Aorta (tissue), 5 donors: ENCODE measurements at regions of chr10 and their contacts with region 1.

Region 1: DNA sequence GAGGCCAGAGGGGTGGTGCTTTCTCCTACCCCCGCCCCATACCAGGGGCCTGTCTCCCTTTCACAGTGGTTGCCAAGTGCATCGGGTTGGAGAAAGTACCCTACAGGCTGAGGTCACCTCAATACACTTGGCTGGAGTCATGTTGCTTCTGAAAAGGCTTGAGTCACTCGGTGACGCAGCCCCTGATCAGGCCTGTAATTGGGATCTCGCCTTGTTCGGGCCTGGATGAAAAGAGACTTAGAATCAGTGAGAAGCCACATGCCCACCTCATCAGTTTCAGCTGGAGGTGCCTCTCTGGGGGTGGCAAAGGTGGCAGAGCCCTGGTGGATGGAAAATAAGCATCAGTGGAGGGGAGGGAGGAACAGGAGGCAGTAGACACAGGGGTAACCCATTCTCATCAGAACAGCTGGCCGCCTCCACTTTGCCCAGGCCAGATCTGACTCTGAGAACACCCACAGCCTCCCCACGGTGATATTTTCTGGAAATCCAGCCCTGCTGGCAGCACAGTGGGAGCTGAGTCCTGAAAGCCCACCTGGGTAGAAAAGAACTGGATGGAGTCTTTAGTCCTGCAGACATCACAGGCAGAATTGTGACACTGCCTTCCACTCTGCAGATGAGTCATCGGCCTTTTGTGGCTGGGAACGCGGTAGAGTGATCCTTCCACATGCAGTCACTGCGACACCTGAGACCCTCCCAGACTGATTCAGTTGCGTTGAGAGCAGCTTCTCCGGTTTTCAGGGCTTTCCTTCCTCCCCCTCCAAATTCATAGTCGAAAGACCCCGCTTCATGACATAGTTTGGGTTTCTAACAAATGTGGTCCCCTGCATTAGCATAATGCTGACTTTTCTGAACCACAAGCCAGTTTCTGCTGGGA is 108.0 kb downstream of the GRK5 start:
- DNase-seq: peak; percentile 84 to 91
- ATAC-seq: peak; percentile 83
- H3K4me3 ChIP-seq: no peak overlapping the region
- H3K27ac ChIP-seq: peak overlapping the region; percentile 89 to 92
- H3K4me1 ChIP-seq: peaks cover 4 to 8% of the 10 kb centered on the region in 2 donors
- H3K27me3 ChIP-seq: no peaks in the 10 kb centered on the region

Region 2: DNA sequence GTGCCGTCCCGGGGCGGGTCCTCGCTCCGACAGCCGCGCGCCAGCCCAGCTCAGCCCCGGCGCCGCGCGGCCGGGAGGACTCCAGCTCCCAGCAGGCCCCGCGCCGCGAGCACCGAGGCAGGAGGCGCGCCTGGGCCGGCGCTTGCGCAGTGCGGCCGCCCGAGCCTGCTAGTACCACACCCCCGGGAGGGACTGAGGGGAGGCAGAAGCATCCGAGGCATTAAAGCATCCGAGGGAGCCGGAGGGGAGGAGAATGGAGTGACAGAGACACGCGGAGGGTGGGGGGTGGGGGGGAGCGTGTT is 108.0 kb before region 1 on chr10 and contains the start of gene GRK5:
- intact Hi-C with region 1: loop called in 1 of 2 experiments (anchors 5 kb)
- DNase-seq: peak; percentile 97
- ATAC-seq: peak; percentile 95
- H3K4me3 ChIP-seq: peak within 1 kb of the TSS; percentile 89 to 95
- H3K27ac ChIP-seq: peak within 1 kb of the TSS; percentile 80 to 91
- H3K4me1 ChIP-seq: peaks cover 0 to 6% of the 10 kb centered on the region in 2 donors
- H3K27me3 ChIP-seq: no peaks in the 10 kb centered on the region
- total RNA-seq, gene GRK5: 73.8 to 112 TPM

Region 3: DNA sequence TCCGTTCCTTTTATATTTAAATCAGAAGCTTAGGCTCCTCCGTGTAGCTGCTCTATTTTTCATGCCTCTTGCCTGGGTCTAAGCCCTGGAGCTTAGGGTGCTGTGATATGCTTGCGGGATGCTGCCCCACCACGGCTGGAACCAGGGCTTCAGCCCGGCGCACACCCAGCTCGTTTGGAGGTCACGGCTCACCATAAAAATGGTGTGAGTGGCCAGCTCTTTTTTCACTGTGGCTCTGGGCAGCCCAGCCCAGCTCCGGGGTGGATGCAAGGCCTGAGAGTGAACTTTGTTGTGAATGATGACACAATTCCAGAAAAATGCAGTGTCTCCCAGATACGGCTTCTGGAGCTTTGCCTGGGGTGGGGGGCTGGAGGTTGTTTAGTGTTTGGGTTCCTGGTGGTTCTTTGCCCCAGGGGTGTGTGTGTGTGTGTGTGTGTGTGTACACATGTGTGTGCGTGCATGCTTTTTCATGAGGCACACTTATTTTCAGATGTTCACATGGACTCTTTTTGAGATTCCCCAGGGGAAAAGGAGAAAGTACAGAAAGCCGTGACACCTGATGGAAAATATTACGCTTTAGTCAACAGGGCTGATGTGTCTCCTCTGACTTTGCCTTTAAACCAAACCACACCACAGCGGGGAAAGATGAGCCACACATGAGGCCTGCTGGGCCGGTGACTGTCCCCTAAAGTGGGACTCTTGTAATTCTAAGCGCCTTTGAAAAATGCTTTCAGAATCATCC is 61.8 kb before region 1 on chr10:
- intact Hi-C with region 1: loop called in 1 of 2 experiments (anchors 10 kb)
- DNase-seq: peak; percentile 85 to 89
- ATAC-seq: peak; percentile 86
- H3K4me3 ChIP-seq: no peak overlapping the region
- H3K27ac ChIP-seq: peak overlapping the region; percentile 57 to 94
- H3K4me1 ChIP-seq: peaks cover 3% of the 10 kb centered on the region in 2 donors
- H3K27me3 ChIP-seq: no peaks in the 10 kb centered on the region

Region 4: GRCh38 chr10:119274519-119275045 is 40.8 kb before region 1 on chr10:
- intact Hi-C with region 1: loop called in 1 of 2 experiments (anchors 5 kb)
- DNase-seq: peak; percentile 29 to 39
- ATAC-seq: no peak
- H3K4me3 ChIP-seq: no peak overlapping the region
- H3K27ac ChIP-seq: peak overlapping the region; percentile 32 to 82
- H3K4me1 ChIP-seq: no peaks in the 10 kb centered on the region
- H3K27me3 ChIP-seq: no peaks in the 10 kb centered on the region

Region 5: DNA sequence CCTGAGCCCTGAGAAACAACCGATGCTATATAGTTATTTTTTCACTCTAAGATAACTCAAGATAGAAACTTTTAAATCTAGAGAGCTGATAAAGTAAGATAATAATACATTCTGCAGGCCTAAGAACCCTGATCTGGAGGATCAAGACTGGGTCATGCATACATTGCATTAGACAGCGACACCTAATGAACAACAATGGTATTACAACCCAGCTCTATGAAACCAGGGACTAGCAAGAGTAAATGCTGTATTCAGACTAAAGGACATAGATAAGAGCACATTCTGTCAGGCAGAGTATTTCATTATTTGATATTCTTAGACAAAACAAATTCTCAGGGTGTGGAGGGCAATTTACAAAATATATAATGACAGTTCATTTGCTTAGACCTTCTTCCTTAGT is 40.6 kb after region 1 on chr10:
- intact Hi-C with region 1: loop called in 1 of 2 experiments (anchors 5 kb)
- DNase-seq: no peak
- ATAC-seq: no peak
- H3K4me3 ChIP-seq: no peak overlapping the region
- H3K27ac ChIP-seq: no peak overlapping the region
- H3K4me1 ChIP-seq: peaks cover 0 to 1% of the 10 kb centered on the region in 2 donors
- H3K27me3 ChIP-seq: no peaks in the 10 kb centered on the region

Region 6: GRCh38 chr10:119370111-119370741 is 54.9 kb after region 1 on chr10:
- intact Hi-C with region 1: loop called in 1 of 2 experiments (anchors 5 kb)
- DNase-seq: peak in 1 of 2 donors; percentile 79
- ATAC-seq: peak; percentile 66
- H3K4me3 ChIP-seq: no peak overlapping the region
- H3K27ac ChIP-seq: peak overlapping the region in 1 of 2 donors; percentile 49
- H3K4me1 ChIP-seq: peaks cover 0 to 2% of the 10 kb centered on the region in 2 donors
- H3K27me3 ChIP-seq: no peaks in the 10 kb centered on the region